Activated T-helper 1 cell treated with anti-CD3 and anti-CD28 coated beads, Interleukin-12 subunit alpha, Interleukin-12 subunit beta, Interleukin-2, Interleukin-4 antibody, amounts not matched to agents 30 ng/mL and 10 ng/mL and 1 ng/mL, durations not matched to agents 14 hours and 24 hours and 36 hours (primary cell): ENCODE measurements at regions of chr15 and their contacts with region 1.

Region 1: DNA sequence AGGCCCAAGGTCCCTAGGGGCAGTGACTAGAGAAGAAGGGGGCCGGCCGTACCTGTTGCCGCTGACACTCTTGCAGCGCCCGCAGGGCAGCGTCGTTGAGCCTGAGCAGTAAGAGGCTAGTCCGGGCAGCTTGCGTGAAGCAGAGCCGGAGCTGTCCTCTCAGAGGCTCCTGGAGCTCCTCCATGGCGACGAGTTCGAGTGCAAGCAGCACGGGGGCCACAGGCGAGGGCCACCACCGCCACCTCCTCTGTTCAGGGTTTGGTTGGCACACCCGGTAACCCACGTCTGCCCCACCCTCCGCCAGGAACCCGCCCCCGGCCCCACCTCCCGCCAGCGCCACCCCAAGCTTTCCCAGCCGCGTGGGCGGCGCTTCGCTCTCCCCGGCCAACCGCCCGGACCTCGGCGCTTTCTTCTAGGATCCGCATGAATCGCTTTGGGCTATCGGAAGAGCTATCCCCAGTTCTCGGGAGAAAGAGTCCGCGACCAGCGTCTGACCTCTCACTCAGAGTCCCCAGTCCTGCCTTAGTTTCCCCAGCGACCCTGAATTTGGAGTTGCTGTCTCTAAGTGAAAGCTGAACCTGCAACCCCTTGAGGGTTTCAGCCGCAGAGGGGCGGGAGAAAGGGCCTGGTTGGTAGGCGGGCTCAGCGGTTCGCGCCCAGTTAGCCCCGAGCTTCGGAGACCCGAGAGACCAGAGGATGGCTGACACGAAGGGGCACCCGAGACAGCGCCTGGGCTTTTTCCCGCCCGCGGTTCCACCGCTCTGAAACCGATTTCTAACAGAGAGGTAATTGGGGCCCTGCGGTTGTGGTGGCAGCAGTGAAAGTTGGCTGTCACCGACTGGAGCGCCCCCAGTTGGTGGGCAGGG is at the start of gene ELL3:
- DNase-seq: peak; percentile 63
- H3K4me3 Mint-ChIP-seq: peak within 1 kb of the TSS; percentile 82
- H3K27ac Mint-ChIP-seq: peak within 1 kb of the TSS; percentile 83
- H3K4me1 Mint-ChIP-seq: peaks cover 15% of the 10 kb centered on the region
- H3K27me3 Mint-ChIP-seq: peaks cover 6% of the 10 kb centered on the region
- total RNA-seq, gene ELL3: 0.41 and 0.73 TPM in 2 replicates

Region 2: DNA sequence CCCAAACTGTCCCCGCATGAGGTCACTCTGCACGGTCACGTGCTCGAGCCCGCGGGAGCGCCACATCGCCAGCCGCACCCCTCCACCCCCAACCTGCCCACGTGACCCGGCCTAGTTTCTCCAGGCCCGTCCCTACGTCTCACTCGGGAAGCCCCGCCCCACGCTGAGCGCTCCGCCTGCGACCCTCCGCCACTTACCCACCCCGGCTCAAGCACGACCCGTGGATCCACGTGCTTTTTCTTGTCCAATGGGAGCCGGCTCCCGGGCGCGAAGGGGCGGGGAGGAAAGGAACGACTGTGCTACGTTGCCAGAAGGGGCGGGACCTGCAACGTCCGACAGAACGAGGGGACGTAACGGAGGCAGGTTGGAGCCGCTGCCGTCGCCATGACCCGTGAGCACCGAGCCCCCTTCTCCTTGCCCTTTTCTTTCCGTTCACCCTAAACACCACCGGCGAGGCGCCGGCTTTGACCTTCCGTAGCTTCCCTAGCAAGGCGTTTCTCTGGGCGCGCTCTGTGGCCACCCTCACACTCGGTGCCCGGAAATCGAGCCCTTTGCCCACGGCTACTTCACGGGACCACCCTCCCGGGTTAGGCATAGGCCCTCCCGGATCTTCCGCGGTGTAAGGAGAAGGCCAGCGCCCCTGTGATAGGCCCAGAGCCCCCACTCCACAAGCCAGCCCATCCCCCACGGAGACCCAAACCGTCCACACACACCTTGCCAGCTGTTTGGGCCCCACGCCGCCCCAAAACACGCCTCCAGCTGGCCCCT is 15.2 kb after region 1 on chr15 and contains the start of gene SERF2:
- intact Hi-C with region 1: loop called (anchors 1 kb)
- DNase-seq: peak; percentile 99
- H3K4me3 Mint-ChIP-seq: peak within 1 kb of the TSS; percentile 97
- H3K27ac Mint-ChIP-seq: peak within 1 kb of the TSS; percentile 94
- H3K4me1 Mint-ChIP-seq: peaks cover 43% of the 10 kb centered on the region
- H3K27me3 Mint-ChIP-seq: no peaks in the 10 kb centered on the region
- total RNA-seq, gene SERF2: 531 and 540 TPM in 2 replicates

Region 3: GRCh38 chr15:43808960-43809678 is 32.2 kb after region 1 on chr15:
- intact Hi-C with region 1: no loop called
- DNase-seq: no peak
- H3K4me3 Mint-ChIP-seq: no peak overlapping the region
- H3K27ac Mint-ChIP-seq: no peak overlapping the region
- H3K4me1 Mint-ChIP-seq: peaks cover 10% of the 10 kb centered on the region
- H3K27me3 Mint-ChIP-seq: no peaks in the 10 kb centered on the region